Left cardiac atrium (tissue), 4 donors: ENCODE measurements at regions of chrX and their contacts with region 1.

Region 1: GRCh38 chrX:24150051-24150790 is 692 bp downstream of the ZFX start:
- DNase-seq: peak; percentile 94
- ATAC-seq: peak; percentile 87 to 91

Region 2: DNA sequence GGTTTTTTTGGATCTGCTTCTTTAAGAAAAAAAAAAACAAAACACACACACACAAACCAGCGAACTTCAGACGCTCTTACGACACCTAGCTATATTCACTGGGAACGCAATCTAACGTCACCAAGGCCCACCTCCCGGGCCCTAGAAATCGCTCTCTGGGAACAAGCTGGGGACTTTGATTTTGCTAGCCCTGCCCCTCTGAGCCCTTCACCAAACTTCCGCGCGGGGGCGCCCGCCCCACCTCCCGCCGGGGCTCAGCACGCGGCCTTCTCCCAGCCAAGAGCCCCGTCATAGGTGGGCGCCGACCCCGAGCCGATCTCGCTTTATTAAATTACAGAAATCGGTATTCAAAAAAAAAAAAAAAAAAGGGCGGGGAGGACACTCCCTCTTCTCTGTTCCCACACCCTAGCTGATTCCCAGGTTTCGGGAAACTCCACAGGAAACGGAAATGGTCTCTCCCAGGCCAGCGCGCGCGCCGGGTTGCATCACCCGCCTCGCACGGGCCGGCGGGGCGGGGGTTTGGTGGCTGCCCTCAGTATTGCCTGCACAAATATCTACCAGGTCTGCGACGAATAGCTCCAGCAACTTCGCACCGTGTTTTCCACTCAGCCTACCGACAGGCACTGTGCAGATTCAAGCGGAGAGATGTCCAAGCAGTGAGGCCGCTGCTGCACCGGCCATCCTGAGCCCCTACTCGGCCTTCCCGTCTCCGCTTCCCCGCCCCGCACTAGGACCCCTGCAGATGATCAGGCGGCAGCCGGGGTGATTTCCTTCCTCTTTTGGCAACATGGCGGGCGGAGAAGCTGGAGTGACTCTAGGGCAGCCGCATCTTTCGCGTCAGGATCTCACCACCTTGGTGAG is 95.8 kb before region 1 on chrX and contains the start of gene EIF2S3:
- intact Hi-C with region 1: loop called in 1 of 2 experiments (anchors 10 kb)
- DNase-seq: peak; percentile 91
- ATAC-seq: peak; percentile 97 to 98
- total RNA-seq, gene EIF2S3: 69.7 to 98.0 TPM